Right cardiac atrium (tissue), 5 donors: ENCODE measurements at regions of chr20 and their contacts with region 1.

Region 1: DNA sequence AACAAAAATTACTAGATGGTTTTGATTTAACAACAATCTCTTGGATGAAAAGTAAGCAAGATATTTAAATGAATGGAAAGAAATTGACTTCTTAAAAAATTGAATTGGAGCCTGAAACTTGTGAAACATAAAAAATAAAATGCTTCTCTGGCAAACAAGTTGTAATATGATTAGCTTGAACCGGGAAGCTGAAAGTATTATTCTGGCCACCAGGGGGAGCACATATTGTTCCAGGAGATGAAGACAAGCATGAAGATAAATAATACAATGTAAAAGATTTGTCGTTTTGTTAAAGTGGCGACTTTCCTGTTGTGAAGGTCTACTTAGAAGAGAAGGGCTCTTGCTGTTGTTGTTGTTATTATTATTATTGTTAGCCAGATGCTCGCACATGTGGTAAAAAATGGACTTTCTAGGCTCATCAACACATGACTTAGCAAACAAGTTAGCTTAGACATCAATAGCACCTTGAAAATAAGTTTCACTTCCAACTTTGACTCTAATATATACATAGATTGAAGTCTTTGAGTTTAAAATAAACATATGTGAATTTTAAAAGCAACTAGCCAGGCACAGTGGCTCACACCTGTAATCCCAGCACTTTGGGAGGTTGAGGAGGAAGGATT is 14.2 kb downstream of the PAX1 start:
- DNase-seq: no peak
- ATAC-seq: no peak
- H3K4me3 ChIP-seq: no peak overlapping the region
- H3K27ac ChIP-seq: no peak overlapping the region
- H3K4me1 ChIP-seq: no peaks in the 10 kb centered on the region
- H3K27me3 ChIP-seq: peaks cover 3% of the 10 kb centered on the region

Region 2: DNA sequence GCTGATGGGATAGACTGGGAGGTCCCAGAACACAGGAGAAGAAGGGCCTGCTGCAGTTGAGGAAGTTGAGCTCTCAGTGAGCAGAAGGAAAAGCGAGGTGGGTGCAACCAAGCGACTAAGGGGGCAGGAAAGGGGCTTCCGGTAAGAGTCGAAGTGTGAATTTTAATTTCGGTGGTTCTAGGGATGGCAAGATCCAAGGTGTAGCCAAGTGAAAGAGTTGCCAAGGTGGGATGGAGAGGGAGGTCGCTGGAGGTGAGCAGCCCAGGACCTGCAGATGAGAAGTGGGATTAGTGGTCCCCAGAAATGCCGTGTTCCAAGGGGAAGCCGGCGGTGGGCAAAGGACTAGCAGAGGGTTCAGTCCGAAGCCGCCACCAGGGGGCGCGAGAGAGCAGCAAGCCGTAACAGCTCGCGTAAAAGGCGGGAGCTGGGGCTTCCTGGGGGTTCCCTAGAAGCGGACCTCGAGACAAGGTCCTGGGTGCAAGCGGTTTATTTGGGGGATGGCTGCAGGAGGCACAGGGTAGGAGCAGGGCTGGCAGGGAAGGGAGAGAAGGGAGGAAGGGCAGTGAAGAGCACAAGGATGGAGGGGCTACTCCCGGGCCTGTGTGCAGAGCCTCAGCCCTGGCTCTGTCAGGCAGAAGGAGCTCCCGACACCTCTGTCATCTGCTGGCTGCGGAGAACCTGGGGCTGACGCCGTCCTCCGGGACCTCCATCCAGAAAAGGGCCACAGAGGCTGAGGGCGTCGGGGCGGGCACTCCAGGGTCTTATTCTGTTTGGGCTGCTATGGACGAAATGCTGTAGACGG is 89.4 kb after region 1 on chr20:
- intact Hi-C with region 1: no loop called
- DNase-seq: peak; percentile 44 to 74 (median 66)
- ATAC-seq: peak in 1 of 2 donors; percentile 29
- H3K4me3 ChIP-seq: no peak overlapping the region
- H3K27ac ChIP-seq: no peak overlapping the region
- H3K4me1 ChIP-seq: no peaks in the 10 kb centered on the region
- H3K27me3 ChIP-seq: no peaks in the 10 kb centered on the region

Region 3: GRCh38 chr20:21840991-21841390 is 121.3 kb after region 1 on chr20:
- intact Hi-C with region 1: no loop called
- DNase-seq: no peak
- ATAC-seq: no peak
- H3K4me3 ChIP-seq: no peak overlapping the region
- H3K27ac ChIP-seq: no peak overlapping the region
- H3K4me1 ChIP-seq: no peaks in the 10 kb centered on the region
- H3K27me3 ChIP-seq: no peaks in the 10 kb centered on the region

Region 4: GRCh38 chr20:22248051-22248667 is 528.5 kb after region 1 on chr20:
- intact Hi-C with region 1: loop called in 1 of 4 experiments (anchors 5 kb)
- DNase-seq: no peak
- ATAC-seq: no peak
- H3K4me3 ChIP-seq: no peak overlapping the region
- H3K27ac ChIP-seq: no peak overlapping the region
- H3K4me1 ChIP-seq: no peaks in the 10 kb centered on the region
- H3K27me3 ChIP-seq: no peaks in the 10 kb centered on the region